PC-9 (cell line): ENCODE measurements at regions of chr3 and their contacts with region 1.

Region 1: GRCh38 chr3:150421799-150422548 is 13.9 kb downstream of the TSC22D2 start:
- DNase-seq: peak in 1 of 2 experiments; percentile 10
- H3K4me3 ChIP-seq: no peak overlapping the region
- H3K27ac ChIP-seq: peak overlapping the region; percentile 10; the same call in 1 of the 2 replicates
- H3K4me1 ChIP-seq: peaks cover 53% of the 10 kb centered on the region
- H3K27me3 ChIP-seq: no peaks in the 10 kb centered on the region
- CTCF ChIP-seq: no peak

Region 2: DNA sequence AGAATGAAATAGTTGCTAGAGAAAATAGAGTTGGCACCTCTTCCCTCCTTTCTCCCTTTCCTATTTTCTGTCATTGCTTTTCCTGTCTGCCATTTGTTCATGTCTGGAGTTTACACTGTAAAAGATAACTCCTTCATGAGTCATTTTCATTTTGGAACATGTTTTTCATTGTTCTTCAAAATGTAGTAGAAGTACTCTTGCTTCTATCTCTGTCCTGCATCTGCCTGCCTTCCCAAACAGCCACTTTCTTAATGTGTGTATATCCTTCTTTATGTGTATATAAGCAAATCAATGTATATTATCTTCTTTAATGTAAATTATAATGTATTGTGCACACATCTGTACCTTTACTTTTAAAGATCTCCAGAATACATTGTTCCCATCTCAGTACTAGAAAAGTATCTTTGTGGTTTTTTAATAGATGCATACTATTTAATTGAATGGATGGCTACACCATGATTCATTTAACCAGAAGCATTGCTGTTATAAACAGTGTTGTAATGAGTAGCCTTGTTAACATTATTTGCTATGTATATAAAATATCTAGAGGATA is 27.3 kb after region 1 on chr3:
- CTCF ChIA-PET with region 1: no interaction called
- POLR2A ChIA-PET with region 1: interaction called, 3 read pairs
- intact Hi-C with region 1: loop called (anchors 2 kb)
- DNase-seq: peak in 1 of 2 experiments; percentile 60
- H3K4me3 ChIP-seq: no peak overlapping the region
- H3K27ac ChIP-seq: 0 out of 2 replicates have a peak overlapping the region, but pooled peaks have one; percentile 25
- H3K4me1 ChIP-seq: peaks cover 52% of the 10 kb centered on the region
- H3K27me3 ChIP-seq: no peaks in the 10 kb centered on the region
- CTCF ChIP-seq: no peak